Heart left ventricle (tissue), 16 donors: ENCODE measurements at regions of chr5 and their contacts with region 1.

Region 1: GRCh38 chr5:23352437-23352836 is 155.0 kb upstream of the PRDM9 start:
- DNase-seq: no peak
- ATAC-seq: peak in 1 of 4 donors; percentile 28
- H3K4me3 ChIP-seq: no peak overlapping the region
- H3K27ac ChIP-seq: no peak overlapping the region
- H3K4me1 ChIP-seq: no peaks in the 10 kb centered on the region
- H3K27me3 ChIP-seq: no peaks in the 10 kb centered on the region
- CTCF ChIP-seq: peak in 9 of 12 donors; percentile 26 to 49 (median 31)
- POLR2A ChIP-seq: no peak

Region 2: DNA sequence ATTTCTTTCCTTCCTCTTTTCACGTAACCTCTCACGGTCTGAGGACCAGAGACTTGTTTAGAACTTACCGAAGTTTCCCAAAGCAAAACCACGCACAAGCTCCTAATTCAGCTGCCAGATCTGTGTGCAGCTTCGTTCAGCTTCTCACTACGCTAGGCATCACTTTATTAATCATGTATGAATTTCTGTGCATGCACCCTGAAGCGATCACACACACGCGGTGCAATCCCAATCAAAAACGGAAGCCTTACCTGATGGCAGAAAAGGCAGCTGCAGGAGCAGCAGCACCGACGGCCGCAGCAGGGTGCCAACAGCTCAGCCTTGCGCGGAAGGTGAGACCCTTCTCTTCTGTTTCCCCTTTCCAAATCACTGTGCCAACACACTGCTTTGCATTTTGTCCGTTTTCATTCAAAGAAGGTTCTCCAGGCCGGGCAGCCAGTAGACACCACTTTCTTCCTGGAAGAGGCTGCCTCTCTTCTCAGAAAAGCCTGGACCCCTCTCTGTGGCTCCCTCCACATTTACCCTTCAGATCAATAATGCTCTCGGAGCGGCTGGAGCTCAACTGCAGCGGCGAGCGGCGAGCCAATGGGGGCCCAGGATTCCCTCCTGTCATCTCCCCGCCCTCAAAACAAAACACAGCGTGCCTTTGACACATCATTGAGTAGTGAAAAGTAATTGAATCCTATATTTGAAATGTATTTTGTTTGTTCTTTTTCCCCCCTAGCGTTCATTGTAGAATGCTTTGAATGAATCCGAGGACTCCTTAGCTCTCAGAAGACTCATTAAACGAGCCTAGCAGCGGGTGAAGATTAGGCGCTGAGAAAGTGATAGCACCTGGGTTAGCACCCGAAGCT is 499.4 kb before region 1 on chr5 and contains the start of gene CDH12:
- intact Hi-C with region 1: no loop called
- DNase-seq: no peak
- ATAC-seq: no peak
- H3K4me3 ChIP-seq: peak within 1 kb of the TSS in 9 of 12 donors; percentile 6 to 38 (median 27)
- H3K27ac ChIP-seq: no peak within 1 kb of the TSS
- H3K4me1 ChIP-seq: peaks cover 0 to 11% (median 1%) of the 10 kb centered on the region in 12 donors
- H3K27me3 ChIP-seq: peaks cover 0 to 16% (median 0%) of the 10 kb centered on the region in 9 donors
- CTCF ChIP-seq: no peak
- POLR2A ChIP-seq: no peak
- total RNA-seq, gene CDH12: 0.11 TPM in 1 of 9 donors, not detected in the others

Region 3: DNA sequence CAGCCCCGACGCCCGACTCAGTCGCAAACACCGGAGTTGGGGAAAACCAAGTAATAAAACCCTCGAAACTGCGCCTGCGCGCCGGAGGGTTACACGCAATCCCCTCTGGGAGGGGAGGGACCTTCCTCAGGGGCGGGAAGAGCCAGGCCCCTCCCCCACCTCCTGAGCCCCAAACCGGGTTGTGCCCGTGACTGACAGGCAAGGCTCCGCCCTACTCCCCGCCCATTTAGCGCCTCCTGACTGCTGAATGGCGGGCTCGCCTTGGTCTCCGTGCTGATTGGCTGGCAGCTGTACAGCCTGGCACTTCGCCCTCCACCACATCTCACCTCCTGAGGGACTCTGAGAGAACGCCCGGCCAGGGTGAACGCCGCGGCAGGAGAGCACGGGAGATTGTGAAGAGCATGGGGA is 154.8 kb after region 1 on chr5 and contains the start of gene PRDM9:
- intact Hi-C with region 1: loop called in 1 of 10 experiments (anchors 10 kb)
- DNase-seq: peak; percentile 49 to 79 (median 68)
- ATAC-seq: peak; percentile 95 to 97 (median 96)
- H3K4me3 ChIP-seq: peak within 1 kb of the TSS in 9 of 12 donors; percentile 4 to 57 (median 19)
- H3K27ac ChIP-seq: peak within 1 kb of the TSS in 2 of 12 donors; percentile 5 to 42
- H3K4me1 ChIP-seq: no peaks in the 10 kb centered on the region
- H3K27me3 ChIP-seq: no peaks in the 10 kb centered on the region
- CTCF ChIP-seq: no peak
- POLR2A ChIP-seq: no peak
- total RNA-seq, gene PRDM9: not detected

Region 4: GRCh38 chr5:23742701-23743100 is 390.3 kb after region 1 on chr5:
- intact Hi-C with region 1: loop called in 4 of 10 experiments (anchors 2 to 10 kb)
- DNase-seq: no peak
- ATAC-seq: no peak
- H3K4me3 ChIP-seq: no peak overlapping the region
- H3K27ac ChIP-seq: no peak overlapping the region
- H3K4me1 ChIP-seq: no peaks in the 10 kb centered on the region
- H3K27me3 ChIP-seq: peaks cover 0 to 3% (median 0%) of the 10 kb centered on the region in 9 donors
- CTCF ChIP-seq: peak in 4 of 12 donors; percentile 8 to 27 (median 12)
- POLR2A ChIP-seq: no peak